GM10248 (cell line): ENCODE measurements at regions of chr4 and their contacts with region 1.

Region 1: DNA sequence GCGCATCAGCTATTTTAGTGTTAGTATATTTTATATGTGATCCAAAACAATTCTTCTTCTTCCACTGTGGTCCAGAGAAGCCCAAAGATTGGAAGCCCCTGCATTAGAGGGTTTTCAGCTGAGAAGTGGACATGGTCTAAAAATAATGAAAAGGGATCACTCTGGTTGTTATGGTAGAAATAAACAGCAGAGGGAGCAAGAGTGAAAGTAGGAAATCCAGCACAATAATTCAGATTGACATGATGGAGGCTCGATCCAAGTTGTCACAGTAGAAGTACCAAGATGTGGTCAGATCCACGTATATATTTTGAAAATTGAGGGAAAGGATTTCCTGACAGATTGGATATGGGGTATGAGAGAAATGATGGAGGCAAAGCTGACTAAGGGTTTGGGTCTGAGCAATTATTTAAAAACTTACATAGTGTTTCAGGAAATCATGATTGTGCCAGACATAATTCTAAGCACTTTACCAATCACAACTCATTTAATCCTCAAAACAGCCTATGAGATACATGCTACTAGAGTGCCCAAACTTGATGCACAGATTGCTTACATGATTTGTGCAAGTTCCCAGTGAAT is 17.0 kb upstream of the TMEM144 start:
- DNase-seq: no peak
- CTCF ChIP-seq: peak; percentile 46

Region 2: DNA sequence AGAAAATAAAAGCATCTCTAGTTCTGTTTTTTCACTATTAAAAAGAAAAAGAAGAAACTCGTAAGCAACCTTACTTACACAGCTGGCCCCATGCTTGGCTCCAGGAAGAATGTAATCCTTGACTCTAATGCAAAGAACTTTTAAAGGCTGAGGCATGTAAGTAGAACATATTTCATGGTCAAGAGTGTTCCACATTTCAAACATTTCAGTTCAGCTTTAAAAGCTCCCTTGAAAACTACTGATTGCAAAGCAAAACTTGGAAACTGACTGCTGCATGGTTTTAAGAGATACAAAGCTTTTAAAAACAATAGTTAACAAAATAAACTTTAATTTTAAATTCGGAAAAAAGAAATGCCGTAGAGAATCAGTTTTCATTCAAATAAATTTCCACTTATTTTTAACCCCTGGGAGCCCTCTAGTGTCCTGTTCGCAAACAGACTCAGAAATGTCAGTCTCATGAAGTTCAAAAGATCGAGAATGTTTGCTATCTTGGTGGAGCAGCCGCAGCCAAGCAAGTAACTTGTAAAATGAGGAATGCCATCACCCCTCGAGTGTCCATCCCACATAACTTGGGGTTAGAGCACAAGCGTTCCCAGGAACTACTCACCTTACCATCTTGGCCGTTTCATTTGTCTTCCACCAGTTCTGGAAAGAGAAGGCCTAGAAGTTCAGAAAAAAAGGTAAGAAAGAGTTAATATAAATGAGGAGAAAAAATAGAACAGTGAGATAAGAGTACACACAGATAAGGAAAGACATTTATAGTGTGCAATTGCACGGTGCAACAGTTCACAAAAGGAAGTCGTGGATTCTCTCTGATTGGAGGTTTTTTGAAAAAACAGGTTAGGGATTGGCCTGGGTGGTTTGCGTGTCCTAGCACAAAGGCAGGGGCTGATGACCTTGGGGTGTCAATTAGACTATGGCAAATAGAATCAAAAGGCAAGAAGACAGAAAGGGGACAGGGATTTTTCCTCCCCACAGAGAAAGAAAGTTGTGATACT is 20.7 kb before region 1 on chr4 and contains the start of gene GASK1B:
- CTCF ChIA-PET with region 1: interaction called, 11 read pairs
- POLR2A ChIA-PET with region 1: no interaction called
- DNase-seq: peak; percentile 37
- CTCF ChIP-seq: peak; percentile 54

Region 3: DNA sequence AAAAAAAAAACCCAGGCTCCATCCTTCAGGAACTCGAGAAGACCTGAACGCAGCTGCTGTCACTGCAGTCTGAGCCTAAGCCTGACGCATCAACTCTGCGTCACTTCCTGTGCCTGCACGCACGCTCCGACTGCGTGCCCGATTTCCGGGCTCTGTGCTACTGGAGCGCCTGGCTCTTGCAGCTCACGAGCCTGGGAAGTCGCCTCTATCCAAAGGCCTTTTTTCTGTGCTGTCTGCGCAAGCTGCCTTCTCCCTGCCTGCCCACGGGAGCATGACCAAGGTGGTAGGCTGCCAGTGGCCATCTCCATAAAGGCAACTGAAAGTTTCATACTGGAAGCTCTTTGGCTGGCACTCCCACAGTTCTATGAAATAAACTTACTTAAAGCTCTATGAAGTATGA is 10.5 kb before region 1 on chr4:
- CTCF ChIA-PET with region 1: interaction called, 15 read pairs
- POLR2A ChIA-PET with region 1: no interaction called
- DNase-seq: no peak
- CTCF ChIP-seq: no peak

Region 4: DNA sequence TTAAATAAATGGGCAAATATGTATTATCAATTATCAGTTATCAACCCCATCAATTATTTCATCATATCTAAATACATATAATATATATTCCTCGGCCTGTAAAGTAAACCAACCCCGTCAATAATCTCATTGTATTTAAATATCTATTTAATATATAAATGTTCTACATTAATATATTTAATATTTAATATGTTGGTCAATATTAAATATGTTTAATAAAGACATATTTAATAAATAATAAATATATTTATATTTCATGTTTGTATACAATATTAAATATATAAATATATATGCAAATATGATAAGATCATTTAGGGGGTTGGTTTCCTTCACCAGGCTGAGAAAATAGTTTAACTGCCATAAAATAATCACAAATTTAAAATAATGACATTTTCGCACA is 10.7 kb after region 1 on chr4:
- CTCF ChIA-PET with region 1: interaction called, 17 read pairs
- POLR2A ChIA-PET with region 1: no interaction called
- DNase-seq: no peak
- CTCF ChIP-seq: no peak

Region 5: GRCh38 chr4:158209825-158210807 is 16.9 kb after region 1 on chr4 and contains the start of gene TMEM144:
- CTCF ChIA-PET with region 1: interaction called, 20 read pairs
- POLR2A ChIA-PET with region 1: no interaction called
- DNase-seq: peak; percentile 62
- CTCF ChIP-seq: no peak

Region 6: GRCh38 chr4:158253350-158253980 is 60.2 kb after region 1 on chr4:
- CTCF ChIA-PET with region 1: interaction called, 65 read pairs
- POLR2A ChIA-PET with region 1: no interaction called
- DNase-seq: peak; percentile 38
- CTCF ChIP-seq: peak; percentile 72